ENCODE measurements at regions of chr1 and their contacts with region 1.

Region 1: DNA sequence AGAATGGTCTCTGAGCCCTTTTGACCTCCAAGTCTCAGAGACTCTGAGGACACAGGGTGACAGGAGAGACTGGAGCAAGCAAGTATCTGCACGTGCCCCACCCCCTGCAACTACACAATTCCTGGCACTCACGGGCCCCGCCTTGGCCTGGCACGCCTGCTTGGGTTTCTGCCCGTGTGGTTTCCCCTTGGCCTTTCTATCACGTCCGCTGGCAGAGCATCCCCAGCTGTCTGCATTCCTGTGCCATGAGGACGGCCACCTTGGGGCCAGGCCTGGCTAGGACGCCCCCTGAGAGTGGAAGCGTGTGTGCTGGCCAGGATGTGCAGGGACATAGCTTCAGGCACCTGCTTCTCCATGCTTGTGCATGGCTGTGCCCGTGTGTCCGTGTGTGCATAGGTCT is 14.3 kb upstream of the EDN2 start:
- DNase-seq: peak; percentile 65
- H3K27ac ChIP-seq: peak overlapping the region; percentile 93
- CTCF ChIP-seq: no peak

Region 2: DNA sequence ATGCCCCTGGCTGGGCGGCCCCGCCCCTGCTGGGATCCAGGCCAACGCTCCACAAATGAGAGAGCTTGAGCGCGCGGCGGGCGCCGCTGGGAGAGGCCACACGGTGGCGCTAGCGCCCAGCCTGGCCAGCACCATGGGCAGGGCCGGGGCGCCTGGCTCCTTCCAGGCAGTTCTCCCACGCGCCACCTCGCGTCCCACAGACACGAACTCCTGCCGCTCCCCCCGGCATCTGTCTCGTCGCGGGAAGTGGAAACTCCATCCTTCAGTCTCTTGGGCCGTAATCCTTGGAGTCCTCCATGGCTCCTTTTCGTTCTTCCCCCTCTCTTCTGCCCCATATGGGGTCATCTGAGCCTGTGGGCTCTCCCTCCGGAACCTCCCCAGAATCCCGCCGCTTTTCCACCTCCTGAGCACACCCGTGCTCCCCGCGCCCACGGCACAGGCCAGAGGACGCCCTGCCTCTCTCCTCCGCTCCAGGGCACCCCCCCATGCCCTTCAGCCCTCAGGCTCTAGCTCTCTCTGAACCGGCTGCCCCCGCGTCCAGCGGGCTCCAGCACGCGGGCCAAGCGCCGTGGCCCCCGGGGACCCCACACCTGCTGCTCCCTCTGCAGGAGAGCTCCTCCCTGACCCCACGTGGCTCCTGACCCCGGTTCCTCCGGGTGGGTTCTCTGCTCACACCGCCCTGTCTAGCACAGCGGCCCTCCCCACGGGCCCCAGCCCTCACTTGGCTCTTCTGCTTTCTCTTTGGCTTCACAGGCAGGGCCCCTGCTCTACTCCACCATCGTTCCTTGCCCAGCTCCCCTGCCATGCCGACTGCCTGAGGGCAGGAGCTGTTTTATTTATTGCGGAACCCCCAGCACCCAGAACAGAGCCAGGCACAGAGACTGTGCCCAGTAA is 17.6 kb after region 1 on chr1:
- CTCF ChIA-PET with region 1: interaction called, 11 read pairs
- POLR2A ChIA-PET with region 1: no interaction called
- DNase-seq: peak; percentile 87
- H3K27ac ChIP-seq: peak overlapping the region; percentile 36
- CTCF ChIP-seq: peak; percentile 93

Measured in RWPE1 (cell line).